ENCODE measurements at regions of chr20 and their contacts with region 1.

Region 1: DNA sequence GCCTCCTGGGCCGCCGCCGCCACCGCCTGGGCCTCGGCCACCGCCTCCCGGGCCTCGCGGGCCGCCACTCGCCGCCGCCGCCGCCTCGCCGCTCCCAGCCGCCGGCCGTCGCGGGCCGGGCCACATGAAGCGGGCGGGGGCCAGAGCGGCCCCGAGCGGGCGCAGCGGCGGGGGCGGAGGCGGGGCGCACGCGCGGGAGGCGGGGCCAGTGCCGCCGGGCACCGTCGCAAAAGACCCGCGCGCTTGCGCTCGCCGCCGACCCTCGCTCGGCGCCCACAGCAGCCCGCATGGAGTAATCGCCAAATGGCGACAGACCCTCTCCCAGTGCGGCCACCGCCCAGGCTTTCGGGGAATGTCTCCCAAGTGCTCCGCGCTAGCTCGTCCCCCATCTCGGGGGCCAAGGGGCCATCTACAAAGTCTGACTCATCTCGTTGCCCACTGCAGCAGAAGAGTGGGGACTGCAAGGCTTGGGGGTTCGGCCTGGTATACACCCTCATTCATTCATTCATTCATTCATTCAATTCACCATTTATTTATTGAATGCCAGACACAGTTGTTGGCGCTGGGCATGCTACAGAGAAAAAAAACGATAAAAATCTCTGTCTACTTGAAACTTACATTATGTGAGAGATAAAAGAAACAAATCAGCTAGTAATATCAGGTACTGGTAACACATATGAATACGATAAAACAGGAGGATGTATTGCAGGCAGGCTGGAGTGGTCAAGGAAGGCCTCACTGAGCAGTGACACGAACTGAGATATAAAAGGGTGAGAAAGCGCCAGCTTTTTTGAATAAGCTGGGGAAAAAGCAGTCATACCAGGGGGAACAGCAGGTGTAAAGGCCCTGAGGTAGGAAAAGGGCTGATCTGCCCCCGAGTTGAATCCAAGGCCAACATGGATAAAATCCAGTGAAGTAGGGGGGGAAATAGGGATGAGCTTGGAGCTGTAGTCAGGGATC is at the start of gene B4GALT5:
- DNase-seq: peak; percentile 50
- H3K4me3 Mint-ChIP-seq: peak within 1 kb of the TSS; percentile 87
- H3K27ac Mint-ChIP-seq: peak within 1 kb of the TSS; percentile 86
- H3K4me1 Mint-ChIP-seq: peaks cover 42% of the 10 kb centered on the region
- H3K27me3 Mint-ChIP-seq: peaks cover 3% of the 10 kb centered on the region
- total RNA-seq, gene B4GALT5: 18.6 to 19.0 TPM

Region 2: DNA sequence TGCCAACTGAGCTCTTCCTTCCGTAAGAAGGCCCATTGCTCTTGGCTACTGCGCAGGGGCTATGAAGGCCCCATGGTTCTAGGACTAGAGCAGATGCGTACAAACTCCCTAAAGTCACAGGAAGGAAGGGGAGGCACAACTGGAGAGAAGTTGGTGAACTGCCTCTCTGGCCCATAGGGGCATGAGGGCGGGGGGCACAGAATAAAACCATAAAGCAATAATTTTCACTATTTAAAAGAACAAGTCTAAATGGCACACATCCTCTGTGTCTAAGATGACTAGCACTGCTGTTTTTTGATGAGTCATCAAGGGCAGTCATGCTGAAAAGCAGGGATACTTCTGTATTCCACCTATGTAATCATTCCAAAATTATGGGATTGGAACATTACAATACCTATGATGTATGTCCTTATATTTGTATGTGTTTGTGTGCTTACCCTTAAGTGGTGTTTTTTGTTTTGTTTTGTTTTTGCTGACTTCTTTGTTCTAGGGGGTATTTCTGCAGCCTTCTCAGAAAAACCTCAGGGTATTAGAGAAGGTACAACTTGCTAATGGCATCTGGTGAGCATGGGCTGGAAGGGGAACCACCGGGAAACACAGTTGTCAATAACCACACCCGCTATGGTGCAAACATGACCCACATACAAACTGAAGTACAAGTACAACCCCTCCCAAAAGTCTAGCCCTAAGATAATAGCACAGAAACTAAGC is 37.3 kb before region 1 on chr20:
- CTCF ChIA-PET with region 1: interaction called, 3 read pairs
- intact Hi-C with region 1: loop called (anchors 5 kb)
- DNase-seq: peak; percentile 35
- H3K4me3 Mint-ChIP-seq: no peak overlapping the region
- H3K27ac Mint-ChIP-seq: peak overlapping the region; percentile 5
- H3K4me1 Mint-ChIP-seq: peaks cover 51% of the 10 kb centered on the region
- H3K27me3 Mint-ChIP-seq: no peaks in the 10 kb centered on the region

Region 3: GRCh38 chr20:49821870-49822331 is 107.9 kb after region 1 on chr20:
- CTCF ChIA-PET with region 1: no interaction called
- intact Hi-C with region 1: no loop called
- DNase-seq: no peak
- H3K4me3 Mint-ChIP-seq: no peak overlapping the region
- H3K27ac Mint-ChIP-seq: peak overlapping the region; percentile 61
- H3K4me1 Mint-ChIP-seq: peaks cover 46% of the 10 kb centered on the region
- H3K27me3 Mint-ChIP-seq: no peaks in the 10 kb centered on the region

Region 4: DNA sequence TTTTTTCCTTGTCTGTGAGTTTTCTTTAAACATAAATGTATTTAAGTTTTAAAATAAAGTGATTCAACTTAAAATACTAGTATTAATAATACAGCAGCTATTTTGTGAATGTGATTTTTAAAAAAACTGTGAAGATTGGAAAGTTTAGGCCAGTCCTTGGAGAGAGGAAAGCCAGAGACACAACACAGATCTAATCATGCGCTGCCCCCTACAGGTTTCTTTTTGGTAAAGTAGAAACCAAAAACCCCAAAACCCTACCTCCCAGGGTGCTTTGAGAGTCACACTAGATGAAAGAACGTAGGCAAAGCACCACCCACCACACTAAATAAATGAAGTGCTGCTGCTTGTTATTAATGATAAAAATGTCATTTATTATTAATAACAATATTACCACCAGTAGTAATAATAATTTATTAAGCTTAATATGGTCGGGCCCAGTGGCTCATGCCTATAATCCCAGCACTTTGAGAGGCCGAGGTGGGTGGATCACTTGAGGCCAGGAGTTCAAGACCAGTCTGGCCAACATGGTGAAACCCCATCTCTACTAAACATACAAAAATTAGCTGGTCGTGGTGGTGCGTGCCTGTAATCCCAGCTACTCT is 132.3 kb after region 1 on chr20:
- CTCF ChIA-PET with region 1: interaction called, 5 read pairs
- intact Hi-C with region 1: loop called (anchors 1 kb)
- DNase-seq: peak; percentile 72
- H3K4me3 Mint-ChIP-seq: no peak overlapping the region
- H3K27ac Mint-ChIP-seq: no peak overlapping the region
- H3K4me1 Mint-ChIP-seq: peaks cover 3% of the 10 kb centered on the region
- H3K27me3 Mint-ChIP-seq: no peaks in the 10 kb centered on the region